Panc1 (cell line): ENCODE measurements at regions of chr11 and their contacts with region 1.

Region 1: GRCh38 chr11:109946322-109946846 is 146.8 kb upstream of the ZC3H12C start:
- DNase-seq: peak; percentile 90
- ATAC-seq: peak; percentile 99
- H3K4me3 ChIP-seq: peak overlapping the region; percentile 22 to 53
- H3K27ac ChIP-seq: peak overlapping the region; percentile 40; the same call in 1 of the 2 replicates
- H3K4me1 ChIP-seq: no peaks in the 10 kb centered on the region
- H3K27me3 ChIP-seq: peaks cover 5% of the 10 kb centered on the region; the same call in 1 of the 2 replicates
- CTCF ChIP-seq: peak; percentile 96

Region 2: GRCh38 chr11:110015695-110016094 is 69.3 kb after region 1 on chr11:
- CTCF ChIA-PET with region 1: no interaction called
- POLR2A ChIA-PET with region 1: no interaction called
- in situ Hi-C with region 1: no loop called
- intact Hi-C with region 1: no loop called
- DNase-seq: no peak
- ATAC-seq: no peak
- H3K4me3 ChIP-seq: no peak overlapping the region
- H3K27ac ChIP-seq: no peak overlapping the region
- H3K4me1 ChIP-seq: no peaks in the 10 kb centered on the region
- H3K27me3 ChIP-seq: no peaks in the 10 kb centered on the region
- CTCF ChIP-seq: no peak

Region 3: DNA sequence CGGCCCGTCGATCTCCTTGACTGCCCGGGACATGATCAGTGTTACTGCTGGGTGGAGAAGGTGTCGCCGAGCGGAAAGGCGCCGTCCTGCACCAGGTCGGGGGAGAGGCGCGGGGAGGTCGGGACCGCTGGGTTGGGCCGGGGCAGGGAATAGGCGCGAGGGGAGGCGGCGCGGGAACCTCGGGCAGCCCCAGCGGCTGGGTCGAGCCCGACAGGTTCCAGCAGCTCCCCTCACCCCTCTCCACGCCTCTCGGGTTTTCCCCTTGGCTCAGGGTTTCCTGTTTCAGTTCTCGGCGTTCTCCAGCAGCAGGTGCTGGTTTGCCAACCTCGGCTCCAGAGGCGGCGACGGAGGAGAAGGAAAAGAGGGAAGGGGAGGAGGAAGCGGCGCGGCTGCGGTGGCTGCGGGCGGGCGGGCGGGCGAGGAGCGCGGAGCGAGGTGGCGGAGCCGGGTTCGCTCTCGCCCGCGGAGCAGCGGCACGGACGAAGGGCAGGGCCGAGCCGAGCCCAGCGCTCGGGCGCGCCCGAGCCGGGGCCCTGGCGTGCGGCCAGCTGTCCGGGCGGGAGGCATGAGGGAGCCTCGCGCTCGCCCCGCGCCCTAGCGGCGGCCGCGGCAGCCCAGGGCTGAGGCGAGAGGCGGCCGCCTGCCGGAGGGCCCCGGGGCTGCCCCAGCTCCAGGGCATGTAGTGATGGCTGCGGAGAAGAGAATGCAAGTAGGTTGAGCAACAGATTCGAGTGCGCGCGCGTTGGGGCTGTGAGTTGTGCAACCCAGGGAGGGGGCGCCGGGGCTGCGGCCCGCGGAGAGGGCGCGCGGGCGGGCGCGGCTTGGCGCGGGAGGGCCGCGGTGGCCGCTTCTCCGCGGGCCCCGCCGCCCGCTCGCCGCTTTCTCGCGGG is 146.4 kb after region 1 on chr11 and contains the start of gene ZC3H12C:
- CTCF ChIA-PET with region 1: no interaction called
- POLR2A ChIA-PET with region 1: no interaction called
- in situ Hi-C with region 1: no loop called
- intact Hi-C with region 1: loop called (anchors 5 kb)
- DNase-seq: peak; percentile 72
- ATAC-seq: peak; percentile 89
- H3K4me3 ChIP-seq: peak within 1 kb of the TSS; percentile 70 to 72
- H3K27ac ChIP-seq: peak within 1 kb of the TSS; percentile 86
- H3K4me1 ChIP-seq: peaks cover 36% of the 10 kb centered on the region
- H3K27me3 ChIP-seq: peaks cover 8% of the 10 kb centered on the region; the same call in 1 of the 2 replicates
- CTCF ChIP-seq: peak; percentile 79
- total RNA-seq, gene ZC3H12C: 13.5 TPM

Region 4: GRCh38 chr11:110173811-110174644 is 227.6 kb after region 1 on chr11:
- CTCF ChIA-PET with region 1: no interaction called
- POLR2A ChIA-PET with region 1: no interaction called
- in situ Hi-C with region 1: no loop called
- intact Hi-C with region 1: loop called (anchors 5 kb)
- DNase-seq: no peak
- ATAC-seq: peak; percentile 86
- H3K4me3 ChIP-seq: no peak overlapping the region
- H3K27ac ChIP-seq: no peak overlapping the region
- H3K4me1 ChIP-seq: no peaks in the 10 kb centered on the region; the same call in 1 of the 2 replicates
- H3K27me3 ChIP-seq: no peaks in the 10 kb centered on the region
- CTCF ChIP-seq: peak; percentile 96

Region 5: GRCh38 chr11:110376711-110377324 is 430.4 kb after region 1 on chr11:
- CTCF ChIA-PET with region 1: no interaction called
- POLR2A ChIA-PET with region 1: no interaction called
- in situ Hi-C with region 1: no loop called
- intact Hi-C with region 1: loop called (anchors 5 kb)
- DNase-seq: peak; percentile 46
- ATAC-seq: peak; percentile 94
- H3K4me3 ChIP-seq: no peak overlapping the region
- H3K27ac ChIP-seq: 0 out of 2 replicates have a peak overlapping the region, but pooled peaks have one; percentile 10
- H3K4me1 ChIP-seq: peaks cover 9% of the 10 kb centered on the region; the same call in 1 of the 2 replicates
- H3K27me3 ChIP-seq: no peaks in the 10 kb centered on the region
- CTCF ChIP-seq: peak; percentile 90